Adrenal gland (tissue), 19 donors: ENCODE measurements at regions of chr18 and their contacts with region 1.

Region 1: DNA sequence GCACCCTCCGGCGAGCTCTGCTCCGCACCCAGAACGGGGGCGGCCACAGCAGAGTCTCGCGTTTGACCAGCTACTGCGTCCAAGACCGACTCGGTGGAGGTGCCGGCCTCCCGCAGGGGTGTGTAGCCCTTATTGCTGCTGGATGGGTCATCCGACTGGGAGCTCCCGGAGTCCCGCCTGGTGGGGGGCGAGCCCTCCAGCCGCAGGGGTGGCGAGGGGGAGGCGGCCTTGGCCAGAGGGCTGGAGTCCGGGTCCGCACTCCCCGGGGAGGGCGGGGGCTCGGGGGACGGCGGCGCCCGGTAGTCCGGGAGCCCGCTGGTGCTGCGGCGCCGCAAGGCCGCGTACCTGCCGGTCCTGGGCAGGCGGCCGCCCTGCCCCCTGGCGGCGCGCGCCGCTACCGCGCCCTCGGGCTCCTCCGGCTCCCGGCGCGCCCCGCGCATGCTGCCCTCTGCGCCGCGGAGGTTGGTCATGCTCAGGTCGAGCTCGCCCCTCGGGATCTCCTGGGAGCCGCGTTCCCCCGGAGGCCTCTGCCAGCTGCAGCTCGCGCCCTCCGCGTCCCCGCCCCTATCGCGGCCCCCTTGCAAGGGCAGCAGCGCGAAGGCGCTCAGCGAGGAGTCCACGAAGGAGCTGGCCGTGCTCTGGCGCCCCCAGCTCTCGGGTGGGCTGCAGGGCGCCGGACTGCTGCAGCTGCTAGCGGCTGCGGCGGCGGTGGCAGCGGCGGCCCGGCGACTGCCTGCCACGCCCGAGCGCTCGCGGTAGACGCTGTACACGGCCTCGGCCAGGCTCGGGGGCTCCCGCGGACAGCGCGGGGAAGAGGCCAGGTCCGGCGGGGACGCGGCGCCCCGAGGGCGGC is 4.8 kb downstream of the TMEM200C start:
- DNase-seq: peak in 6 of 7 donors; percentile 53 to 65 (median 62)
- H3K4me3 ChIP-seq: peak overlapping the region in 2 of 4 donors; percentile 68 to 79
- H3K27ac ChIP-seq: peak overlapping the region in 3 of 5 donors; percentile 38 to 85 (median 77)
- H3K4me1 ChIP-seq: peaks cover 5 to 15% of the 10 kb centered on the region in 2 donors
- H3K27me3 ChIP-seq: no peaks in the 10 kb centered on the region
- CTCF ChIP-seq: peak in 4 of 6 experiments; percentile 17 to 80 (median 74)
- POLR2A ChIP-seq: peak in 1 of 2 donors; percentile 19

Region 2: DNA sequence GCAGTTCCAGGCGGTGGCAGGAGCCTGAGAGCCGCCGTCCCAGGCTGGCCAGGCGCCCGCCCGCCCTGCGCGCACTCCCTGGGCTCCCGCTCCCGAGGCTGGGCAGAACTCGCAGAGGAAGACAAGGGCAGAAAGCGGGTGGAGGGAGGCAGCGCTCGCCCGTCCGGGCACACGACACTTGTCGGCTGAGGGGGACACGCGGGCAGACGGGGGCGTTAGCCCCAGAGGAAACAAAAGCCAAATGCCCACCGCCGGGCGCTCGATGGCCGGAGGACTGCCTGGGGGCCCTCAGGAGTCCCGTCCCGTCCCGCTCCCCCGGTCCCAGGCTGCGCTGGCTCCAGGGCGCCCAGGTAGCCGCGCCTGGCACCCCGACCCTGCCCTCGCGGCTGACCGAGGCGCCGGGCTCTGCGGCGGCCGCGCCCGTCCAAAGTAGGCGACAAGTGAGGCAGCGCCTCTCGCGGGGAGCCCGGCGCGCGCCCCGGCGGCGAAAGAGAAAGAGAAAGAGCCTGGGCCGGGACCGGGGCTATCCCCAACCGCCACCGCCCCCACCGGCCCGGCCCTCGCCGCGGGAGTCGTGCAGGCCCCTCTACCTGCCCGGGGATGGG is 523.7 kb after region 1 on chr18:
- intact Hi-C with region 1: loop called in 1 of 2 experiments (anchors 10 kb)
- DNase-seq: peak; percentile 74 to 85 (median 80)
- H3K4me3 ChIP-seq: peak overlapping the region; percentile 2 to 98 (median 76)
- H3K27ac ChIP-seq: peak overlapping the region; percentile 60 to 99 (median 93)
- H3K4me1 ChIP-seq: peaks cover 0 to 4% of the 10 kb centered on the region in 2 donors
- H3K27me3 ChIP-seq: no peaks in the 10 kb centered on the region
- CTCF ChIP-seq: peak in 2 of 6 experiments; percentile 13 to 15
- POLR2A ChIP-seq: peak in 1 of 2 donors; percentile 42

Region 3: DNA sequence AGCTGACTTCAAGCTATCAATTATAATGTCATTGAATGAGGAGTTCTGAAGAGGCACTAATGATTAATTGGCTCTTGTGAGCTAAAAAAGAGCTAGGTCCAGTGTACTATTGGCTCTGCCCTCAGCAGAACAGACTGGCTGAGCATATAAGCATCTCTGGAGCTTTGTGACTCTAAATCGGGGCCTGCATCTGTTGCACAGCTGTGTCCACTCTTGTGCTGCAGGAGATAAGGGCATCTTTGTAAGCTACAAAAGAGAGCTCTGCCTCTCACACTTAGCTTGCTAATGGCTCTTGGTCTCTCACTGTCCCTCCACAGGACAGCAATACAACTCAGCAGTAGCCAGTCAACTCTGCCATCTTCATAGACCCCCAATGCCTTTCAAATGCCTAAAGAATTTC is 585.6 kb after region 1 on chr18:
- intact Hi-C with region 1: loop called in 1 of 2 experiments (anchors 5 kb)
- DNase-seq: no peak
- H3K4me3 ChIP-seq: no peak overlapping the region
- H3K27ac ChIP-seq: no peak overlapping the region
- H3K4me1 ChIP-seq: no peaks in the 10 kb centered on the region
- H3K27me3 ChIP-seq: no peaks in the 10 kb centered on the region
- CTCF ChIP-seq: no peak
- POLR2A ChIP-seq: no peak